Calu3 (cell line): ENCODE measurements at regions of chr3 and their contacts with region 1.

Region 1: DNA sequence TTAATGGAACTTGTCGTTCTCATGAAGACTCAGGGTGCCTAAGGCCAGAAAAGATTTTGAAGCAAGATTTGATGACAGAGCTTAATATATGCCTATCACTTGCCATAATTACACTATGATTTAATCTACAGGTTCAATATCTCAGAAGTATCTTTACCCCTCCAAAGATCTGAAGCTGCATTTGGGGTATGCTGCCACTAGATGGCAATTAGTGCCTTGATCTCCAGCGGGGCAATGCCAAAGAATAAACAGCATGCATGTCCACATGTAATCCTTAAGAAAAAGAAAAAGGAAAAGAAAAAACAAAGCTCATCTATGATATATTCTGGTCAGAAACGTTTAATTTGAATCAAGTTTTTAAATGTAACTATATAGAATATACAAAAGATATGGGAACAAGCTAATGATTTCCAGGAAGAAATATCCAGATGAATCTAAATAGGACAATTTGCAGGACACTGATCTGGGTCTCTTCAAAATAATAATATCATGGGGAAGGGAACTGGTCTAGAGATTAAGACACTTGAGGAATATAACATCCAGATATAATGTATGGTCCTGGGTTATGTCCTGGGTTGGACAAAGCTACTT is 55.0 kb upstream of the SOX14 start:
- DNase-seq: peak; percentile 52
- H3K4me3 Mint-ChIP-seq: no peak overlapping the region
- H3K27ac Mint-ChIP-seq: no peak overlapping the region
- H3K4me1 Mint-ChIP-seq: no peaks in the 10 kb centered on the region
- H3K27me3 Mint-ChIP-seq: peaks cover 17% of the 10 kb centered on the region
- CTCF ChIP-seq: peak; percentile 47

Region 2: GRCh38 chr3:136792556-136793330 is 916.4 kb before region 1 on chr3:
- CTCF ChIA-PET with region 1: no interaction called
- intact Hi-C with region 1: no loop called
- DNase-seq: no peak
- H3K4me3 Mint-ChIP-seq: no peak overlapping the region
- H3K27ac Mint-ChIP-seq: no peak overlapping the region
- H3K4me1 Mint-ChIP-seq: no peaks in the 10 kb centered on the region
- H3K27me3 Mint-ChIP-seq: no peaks in the 10 kb centered on the region
- CTCF ChIP-seq: no peak

Region 3: GRCh38 chr3:137792626-137793271 is 83.6 kb after region 1 on chr3:
- CTCF ChIA-PET with region 1: interaction called, 4 read pairs
- intact Hi-C with region 1: loop called (anchors 1 kb)
- DNase-seq: peak; percentile 51
- H3K4me3 Mint-ChIP-seq: no peak overlapping the region
- H3K27ac Mint-ChIP-seq: no peak overlapping the region
- H3K4me1 Mint-ChIP-seq: no peaks in the 10 kb centered on the region
- H3K27me3 Mint-ChIP-seq: peaks cover 2% of the 10 kb centered on the region
- CTCF ChIP-seq: peak; percentile 37

Region 4: DNA sequence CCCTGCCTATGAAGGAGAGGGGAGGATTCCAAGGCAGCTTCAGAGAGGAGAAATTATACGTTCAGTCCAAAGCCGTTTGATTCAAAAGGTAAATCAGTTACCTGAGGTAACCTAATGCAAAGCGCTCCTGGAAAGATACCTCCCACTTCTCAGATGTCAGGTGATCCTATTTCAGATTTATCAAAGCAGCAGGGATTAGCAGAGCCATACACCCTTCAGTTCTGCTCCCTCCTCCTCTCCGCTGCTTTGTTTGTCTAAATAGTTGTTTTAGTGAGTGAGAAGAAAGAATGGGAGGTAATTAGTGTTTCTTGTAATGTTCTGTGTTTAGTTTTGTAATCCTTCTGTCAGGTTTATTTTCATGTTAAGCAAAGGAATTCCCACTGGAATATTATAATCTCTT is 136.1 kb after region 1 on chr3:
- CTCF ChIA-PET with region 1: no interaction called
- intact Hi-C with region 1: no loop called
- DNase-seq: no peak
- H3K4me3 Mint-ChIP-seq: no peak overlapping the region
- H3K27ac Mint-ChIP-seq: no peak overlapping the region
- H3K4me1 Mint-ChIP-seq: no peaks in the 10 kb centered on the region
- H3K27me3 Mint-ChIP-seq: peaks cover 52% of the 10 kb centered on the region
- CTCF ChIP-seq: no peak

Region 5: DNA sequence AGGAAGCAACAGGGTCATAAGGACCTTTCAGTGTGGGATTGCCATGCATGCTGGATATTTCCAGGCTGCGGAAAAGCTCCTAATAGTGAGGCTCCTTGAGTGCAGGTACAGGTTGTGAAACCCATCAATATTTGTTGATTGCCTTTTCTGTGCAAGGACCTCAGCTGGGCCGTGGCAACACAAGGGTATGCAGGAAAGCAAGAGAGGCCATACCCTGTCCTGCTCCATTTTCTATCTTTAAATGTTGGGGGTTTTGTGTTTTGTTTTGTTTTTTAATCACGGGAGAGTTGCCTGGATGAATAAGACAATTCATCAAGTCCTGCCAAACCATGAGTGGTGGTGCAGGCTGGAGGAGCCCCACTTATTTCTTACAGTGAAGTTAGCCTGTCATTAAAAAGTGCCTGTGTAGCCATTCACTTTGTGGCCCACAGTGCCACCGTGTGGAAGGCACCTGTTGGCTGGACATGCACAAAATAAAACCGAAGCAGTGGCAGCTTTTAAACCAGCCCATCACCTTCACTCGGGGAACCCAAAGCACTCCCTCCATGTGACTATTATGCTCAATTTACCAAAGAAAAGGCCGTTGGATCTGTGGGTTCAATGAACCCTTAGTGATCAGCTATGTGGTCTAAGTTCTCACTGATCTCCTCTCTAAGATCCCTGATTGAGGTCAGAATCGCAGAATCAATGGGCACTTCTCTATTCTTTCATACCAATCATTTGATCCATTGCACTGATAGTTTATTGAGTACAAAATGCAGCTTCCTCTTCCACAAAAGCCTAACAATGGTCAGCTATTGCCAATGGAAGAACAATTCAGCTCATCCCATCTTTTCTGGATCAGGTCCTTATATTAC is 343.1 kb after region 1 on chr3:
- CTCF ChIA-PET with region 1: no interaction called
- intact Hi-C with region 1: loop called (anchors 2 kb)
- DNase-seq: peak; percentile 75
- H3K4me3 Mint-ChIP-seq: no peak overlapping the region
- H3K27ac Mint-ChIP-seq: no peak overlapping the region
- H3K4me1 Mint-ChIP-seq: no peaks in the 10 kb centered on the region
- H3K27me3 Mint-ChIP-seq: no peaks in the 10 kb centered on the region
- CTCF ChIP-seq: peak; percentile 80